Caco-2 (cell line): ENCODE measurements at regions of chr1 and their contacts with region 1.

Region 1: GRCh38 chr1:58857680-58858673 is 74.1 kb upstream of the JUN start:
- DNase-seq: peak; percentile 30 to 32
- H3K4me3 ChIP-seq: no peak overlapping the region
- H3K4me3 Mint-ChIP-seq: no peak overlapping the region
- H3K27ac Mint-ChIP-seq: peak overlapping the region; percentile 89
- H3K4me1 ChIP-seq: peaks cover 29% of the 10 kb centered on the region
- H3K4me1 Mint-ChIP-seq: peaks cover 18% of the 10 kb centered on the region
- H3K27me3 ChIP-seq: no peaks in the 10 kb centered on the region
- H3K27me3 Mint-ChIP-seq: no peaks in the 10 kb centered on the region
- CTCF ChIP-seq: no peak

Region 2: GRCh38 chr1:58816072-58816746 is 41.8 kb before region 1 on chr1:
- CTCF ChIA-PET with region 1: interaction called, 3 read pairs
- POLR2A ChIA-PET with region 1: interaction called, 6 read pairs
- intact Hi-C with region 1: loop called (anchors 5 kb)
- DNase-seq: peak; percentile 74 to 80
- H3K4me3 ChIP-seq: peak overlapping the region; percentile 55
- H3K4me3 Mint-ChIP-seq: peak overlapping the region; percentile 77
- H3K27ac Mint-ChIP-seq: peak overlapping the region; percentile 73
- H3K4me1 ChIP-seq: peaks cover 22% of the 10 kb centered on the region
- H3K4me1 Mint-ChIP-seq: peaks cover 7% of the 10 kb centered on the region
- H3K27me3 ChIP-seq: no peaks in the 10 kb centered on the region
- H3K27me3 Mint-ChIP-seq: no peaks in the 10 kb centered on the region
- CTCF ChIP-seq: no peak